Activated B cell treated with CpG ODN at 0.5 μM for 24 hours (primary cell): ENCODE measurements at regions of chr3 and their contacts with region 1.

Region 1: GRCh38 chr3:138165061-138165460 is 9.7 kb downstream of the DBR1 start:
- DNase-seq: no peak
- ATAC-seq: no peak
- H3K4me3 Mint-ChIP-seq: no peak overlapping the region
- H3K27ac Mint-ChIP-seq: no peak overlapping the region
- H3K4me1 Mint-ChIP-seq: no peaks in the 10 kb centered on the region
- H3K27me3 Mint-ChIP-seq: no peaks in the 10 kb centered on the region
- CTCF ChIP-seq: no peak

Region 2: GRCh38 chr3:136624894-136625815 is 1539.9 kb before region 1 on chr3:
- CTCF ChIA-PET with region 1: no interaction called
- POLR2A ChIA-PET with region 1: no interaction called
- intact Hi-C with region 1: no loop called
- DNase-seq: no peak
- ATAC-seq: peak; percentile 49
- H3K4me3 Mint-ChIP-seq: no peak overlapping the region
- H3K27ac Mint-ChIP-seq: no peak overlapping the region
- H3K4me1 Mint-ChIP-seq: peaks cover 38% of the 10 kb centered on the region
- H3K27me3 Mint-ChIP-seq: no peaks in the 10 kb centered on the region
- CTCF ChIP-seq: no peak

Region 3: DNA sequence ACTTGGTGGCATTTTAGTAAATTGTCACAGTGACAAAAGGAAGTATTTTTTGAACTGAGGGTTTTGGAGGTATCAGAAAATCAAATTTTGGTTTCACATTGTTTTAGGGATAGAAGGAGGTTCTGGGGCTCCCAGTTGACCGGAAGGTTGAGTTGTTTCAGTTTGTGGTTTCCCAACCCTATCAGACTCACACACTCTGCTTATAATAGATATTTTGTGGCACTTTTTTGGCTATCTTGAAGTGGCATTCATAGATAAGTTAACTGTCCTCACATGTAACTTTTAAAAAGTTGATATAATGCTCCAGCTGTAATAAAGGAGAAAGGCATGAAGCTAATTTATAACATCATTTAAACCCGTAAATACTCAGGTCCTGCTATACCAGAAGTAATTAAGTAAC is 34.8 kb after region 1 on chr3:
- CTCF ChIA-PET with region 1: no interaction called
- POLR2A ChIA-PET with region 1: no interaction called
- intact Hi-C with region 1: loop called (anchors 5 kb)
- DNase-seq: no peak
- ATAC-seq: no peak
- H3K4me3 Mint-ChIP-seq: no peak overlapping the region
- H3K27ac Mint-ChIP-seq: no peak overlapping the region
- H3K4me1 Mint-ChIP-seq: peaks cover 30% of the 10 kb centered on the region
- H3K27me3 Mint-ChIP-seq: no peaks in the 10 kb centered on the region
- CTCF ChIP-seq: no peak

Region 4: DNA sequence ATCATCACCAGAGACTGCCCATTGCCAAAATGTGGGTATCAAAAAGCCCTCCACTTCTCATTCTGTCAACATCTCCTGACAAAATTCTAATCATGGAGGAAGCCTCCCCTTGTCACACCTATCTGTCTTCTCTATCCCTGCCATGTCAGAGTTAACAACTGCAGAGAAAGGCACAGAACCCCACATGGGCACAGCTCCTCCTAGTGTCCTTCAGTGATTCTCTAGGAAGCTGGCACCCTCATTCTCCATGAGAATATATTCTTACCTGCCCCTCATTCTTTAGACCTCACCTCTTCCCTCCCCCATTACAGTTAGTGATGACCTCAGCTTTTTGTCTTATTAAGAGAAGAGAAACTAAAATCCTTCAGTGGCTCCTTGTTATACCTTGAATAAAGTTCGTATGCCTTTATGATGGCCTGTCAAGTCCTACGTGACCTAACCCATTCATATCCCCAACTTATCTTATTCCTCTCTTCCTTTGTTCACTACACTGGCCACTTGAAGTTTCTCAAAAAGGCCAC is 120.0 kb after region 1 on chr3:
- CTCF ChIA-PET with region 1: no interaction called
- POLR2A ChIA-PET with region 1: no interaction called
- intact Hi-C with region 1: no loop called
- DNase-seq: no peak
- ATAC-seq: no peak
- H3K4me3 Mint-ChIP-seq: no peak overlapping the region
- H3K27ac Mint-ChIP-seq: no peak overlapping the region
- H3K4me1 Mint-ChIP-seq: no peaks in the 10 kb centered on the region
- H3K27me3 Mint-ChIP-seq: no peaks in the 10 kb centered on the region
- CTCF ChIP-seq: no peak